ENCODE measurements at regions of chr17 and their contacts with region 1.

Region 1: GRCh38 chr17:64420143-64420971 is 28.6 kb upstream of the MILR1 start:
- DNase-seq: no peak
- ATAC-seq: peak; percentile 59 to 86 (median 70)
- H3K4me3 ChIP-seq: no peak overlapping the region
- H3K27ac ChIP-seq: no peak overlapping the region
- H3K4me1 ChIP-seq: no peaks in the 10 kb centered on the region
- H3K27me3 ChIP-seq: no peaks in the 10 kb centered on the region
- CTCF ChIP-seq: peak; percentile 74

Region 2: DNA sequence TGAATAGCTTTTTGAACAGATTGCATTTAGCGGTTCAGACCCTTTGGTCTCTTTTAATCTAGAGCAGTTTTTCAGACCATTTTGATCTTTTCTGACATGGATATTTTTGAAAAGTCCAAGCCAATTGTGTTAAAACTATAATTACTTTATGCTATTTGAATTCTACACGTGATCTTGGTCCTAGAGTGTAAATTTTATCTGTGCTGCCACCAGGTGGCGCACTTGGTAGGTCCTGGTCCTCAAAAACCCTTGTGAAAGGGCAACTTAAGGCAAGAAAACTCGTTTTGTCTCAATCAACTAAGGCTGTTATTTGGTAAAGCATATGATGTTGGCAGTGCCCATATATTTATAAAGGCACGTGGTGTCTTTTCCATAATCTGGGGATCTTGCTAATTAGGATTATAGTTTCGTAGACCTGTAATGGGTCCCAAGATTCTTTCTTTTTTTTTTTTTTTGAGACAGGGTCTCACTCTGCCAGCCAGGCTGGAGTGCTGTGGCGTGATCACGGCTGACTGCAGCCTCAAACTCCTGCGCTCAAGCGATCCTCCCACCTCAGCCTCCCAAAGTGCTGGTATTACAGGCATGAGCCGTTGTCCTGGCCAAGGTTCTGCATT is 113.4 kb before region 1 on chr17:
- intact Hi-C with region 1: loop called (anchors 1 to 5 kb)
- DNase-seq: peak; percentile 61 to 78
- ATAC-seq: peak in 3 of 4 donors; percentile 46 to 69 (median 50)
- H3K4me3 ChIP-seq: no peak overlapping the region
- H3K27ac ChIP-seq: no peak overlapping the region
- H3K4me1 ChIP-seq: no peaks in the 10 kb centered on the region
- H3K27me3 ChIP-seq: no peaks in the 10 kb centered on the region
- CTCF ChIP-seq: peak; percentile 82

Region 3: DNA sequence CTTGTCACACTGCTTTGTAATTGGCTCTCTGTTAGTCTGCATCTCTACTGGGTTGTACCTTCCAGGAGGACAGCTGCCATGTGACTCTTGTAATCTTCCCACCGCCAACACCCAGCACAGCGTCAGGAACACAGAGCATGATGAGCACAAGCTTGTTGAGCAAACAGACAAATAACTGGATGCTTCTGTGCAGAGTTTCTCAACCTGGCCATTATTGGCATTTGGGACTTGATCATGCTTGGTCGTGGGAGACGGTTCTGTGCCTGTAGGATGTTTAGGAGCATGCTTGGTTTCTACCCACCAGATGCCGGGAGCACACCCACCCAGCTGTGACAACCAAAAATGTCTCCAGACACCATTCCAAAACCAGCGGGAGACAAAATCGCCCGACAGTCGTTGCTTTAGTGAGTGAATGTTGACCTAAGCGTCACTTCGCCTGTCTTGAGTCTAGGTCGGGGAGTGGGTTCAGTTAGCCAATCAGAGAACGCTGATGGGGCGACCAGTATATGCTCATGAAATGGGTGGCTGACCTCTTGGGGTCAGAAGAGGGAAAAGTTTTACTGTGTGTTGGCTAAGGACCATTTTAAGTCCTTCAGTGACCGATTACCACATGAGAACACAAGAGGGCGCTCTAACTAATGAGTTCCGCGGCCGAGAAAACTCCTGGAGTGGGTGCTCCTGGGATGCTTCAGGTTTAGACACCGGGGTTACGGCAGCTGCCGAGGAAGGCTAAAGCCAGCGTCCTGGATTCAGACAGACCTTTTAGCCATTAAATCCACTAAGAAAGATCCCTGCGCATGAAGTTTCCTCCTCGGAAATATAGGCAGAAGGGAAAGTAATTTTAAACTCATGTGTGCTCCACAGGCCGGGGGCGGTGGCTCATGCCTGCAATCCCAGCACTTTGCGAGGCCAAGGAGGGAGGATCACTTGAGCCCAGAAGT is 99.5 kb before region 1 on chr17:
- intact Hi-C with region 1: loop called (anchors 1 to 5 kb)
- DNase-seq: peak; percentile 45 to 65
- ATAC-seq: peak; percentile 55 to 83 (median 70)
- H3K4me3 ChIP-seq: peak overlapping the region; percentile 34
- H3K27ac ChIP-seq: no peak overlapping the region
- H3K4me1 ChIP-seq: peaks cover 8% of the 10 kb centered on the region
- H3K27me3 ChIP-seq: no peaks in the 10 kb centered on the region
- CTCF ChIP-seq: peak; percentile 67

Region 4: GRCh38 chr17:64491034-64491859 is 70.9 kb after region 1 on chr17:
- intact Hi-C with region 1: loop called in 1 of 2 experiments (anchors 1 kb)
- DNase-seq: no peak
- ATAC-seq: peak in 2 of 4 donors; percentile 45 to 61
- H3K4me3 ChIP-seq: no peak overlapping the region
- H3K27ac ChIP-seq: no peak overlapping the region
- H3K4me1 ChIP-seq: peaks cover 19% of the 10 kb centered on the region
- H3K27me3 ChIP-seq: no peaks in the 10 kb centered on the region
- CTCF ChIP-seq: peak; percentile 43

Region 5: DNA sequence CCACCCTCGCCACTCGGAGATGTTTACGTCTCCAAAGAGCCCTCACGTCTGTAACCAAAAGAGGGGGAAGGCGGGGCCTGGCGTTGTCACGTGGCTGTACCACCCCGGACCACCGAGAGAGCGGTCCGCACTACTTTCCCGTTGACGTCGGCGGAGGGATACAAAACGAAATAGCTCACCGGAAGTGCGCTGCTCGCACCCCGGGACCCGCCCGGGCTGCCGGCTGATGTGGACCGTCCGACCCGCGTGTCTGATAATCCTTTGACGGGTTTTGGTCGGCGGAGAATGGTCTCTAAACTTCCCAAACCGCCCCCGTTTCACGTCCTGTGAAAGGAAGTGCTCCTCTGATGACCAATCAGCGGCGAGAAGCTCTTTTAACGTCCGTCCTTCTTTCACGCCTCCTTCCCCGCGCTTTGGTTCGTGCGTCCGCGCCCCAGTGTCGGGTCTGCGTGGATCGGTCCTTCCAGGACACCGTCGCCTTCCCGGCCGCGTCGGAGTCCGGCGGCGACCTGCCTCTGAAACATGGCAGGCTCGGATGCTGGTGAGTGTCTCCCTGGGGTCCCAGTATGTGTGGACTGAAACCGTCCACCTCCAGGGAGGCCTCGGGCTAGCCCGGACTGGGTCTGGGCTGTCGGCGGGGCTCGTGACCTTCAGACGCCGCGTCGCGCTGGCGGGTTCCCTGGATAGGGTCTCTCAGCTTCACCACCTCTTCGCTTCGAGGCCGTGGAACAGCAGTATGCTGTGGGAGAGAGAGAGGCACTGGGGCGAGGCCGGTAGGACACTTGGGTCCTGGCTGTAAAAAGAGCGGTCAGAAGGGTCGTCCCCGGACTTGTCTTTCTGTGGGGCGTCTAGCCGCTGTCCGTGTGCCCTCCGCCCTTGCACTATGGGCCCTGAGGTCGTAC is 86.5 kb after region 1 on chr17 and contains the start of gene CEP95:
- intact Hi-C with region 1: loop called in 1 of 2 experiments (anchors 5 kb)
- DNase-seq: peak; percentile 96 to 98
- ATAC-seq: peak; percentile 81 to 84 (median 84)
- H3K4me3 ChIP-seq: peak within 1 kb of the TSS; percentile 97
- H3K27ac ChIP-seq: peak within 1 kb of the TSS; percentile 100
- H3K4me1 ChIP-seq: peaks cover 47% of the 10 kb centered on the region
- H3K27me3 ChIP-seq: no peaks in the 10 kb centered on the region
- CTCF ChIP-seq: no peak
- total RNA-seq, gene CEP95: 9.3 to 21.7 (median 11.6) TPM

Region 6: DNA sequence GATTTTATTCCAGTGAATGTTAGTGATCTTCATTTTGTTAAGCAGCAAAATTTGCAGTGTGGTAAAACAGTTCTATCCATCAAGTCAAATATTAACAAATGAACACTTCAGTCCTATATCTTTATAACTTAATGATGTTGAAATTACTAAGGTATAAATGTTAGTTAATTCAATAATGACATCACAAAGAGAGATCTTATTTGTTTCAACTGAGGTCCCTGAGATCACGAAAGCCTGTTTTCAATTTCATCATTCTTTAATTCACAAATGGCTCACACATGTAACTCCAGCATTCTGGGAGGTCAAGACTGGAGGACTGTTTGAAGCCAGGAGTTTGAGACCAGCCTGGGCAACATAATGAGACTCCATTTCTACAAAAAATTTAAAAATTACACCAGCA is 227.9 kb after region 1 on chr17:
- intact Hi-C with region 1: loop called in 1 of 2 experiments (anchors 5 kb)
- DNase-seq: no peak
- ATAC-seq: no peak
- H3K4me3 ChIP-seq: no peak overlapping the region
- H3K27ac ChIP-seq: no peak overlapping the region
- H3K4me1 ChIP-seq: no peaks in the 10 kb centered on the region
- H3K27me3 ChIP-seq: no peaks in the 10 kb centered on the region
- CTCF ChIP-seq: no peak